ENCODE measurements at regions of chr9 and their contacts with region 1.

Region 1: GRCh38 chr9:25241421-25241820 is 436.8 kb downstream of the TUSC1 start:
- DNase-seq: no peak
- H3K4me3 Mint-ChIP-seq: no peak overlapping the region
- H3K27ac Mint-ChIP-seq: no peak overlapping the region
- H3K4me1 Mint-ChIP-seq: no peaks in the 10 kb centered on the region
- H3K27me3 Mint-ChIP-seq: no peaks in the 10 kb centered on the region

Region 2: GRCh38 chr9:25177858-25178257 is 63.6 kb before region 1 on chr9:
- intact Hi-C with region 1: loop called (anchors 10 kb)
- DNase-seq: no peak
- H3K4me3 Mint-ChIP-seq: no peak overlapping the region
- H3K27ac Mint-ChIP-seq: no peak overlapping the region
- H3K4me1 Mint-ChIP-seq: no peaks in the 10 kb centered on the region
- H3K27me3 Mint-ChIP-seq: no peaks in the 10 kb centered on the region

Region 3: GRCh38 chr9:25537808-25538207 is 296.4 kb after region 1 on chr9:
- intact Hi-C with region 1: no loop called
- DNase-seq: no peak
- H3K4me3 Mint-ChIP-seq: no peak overlapping the region
- H3K27ac Mint-ChIP-seq: no peak overlapping the region
- H3K4me1 Mint-ChIP-seq: no peaks in the 10 kb centered on the region
- H3K27me3 Mint-ChIP-seq: no peaks in the 10 kb centered on the region